ENCODE measurements at regions of chr13 and their contacts with region 1.

Region 1: DNA sequence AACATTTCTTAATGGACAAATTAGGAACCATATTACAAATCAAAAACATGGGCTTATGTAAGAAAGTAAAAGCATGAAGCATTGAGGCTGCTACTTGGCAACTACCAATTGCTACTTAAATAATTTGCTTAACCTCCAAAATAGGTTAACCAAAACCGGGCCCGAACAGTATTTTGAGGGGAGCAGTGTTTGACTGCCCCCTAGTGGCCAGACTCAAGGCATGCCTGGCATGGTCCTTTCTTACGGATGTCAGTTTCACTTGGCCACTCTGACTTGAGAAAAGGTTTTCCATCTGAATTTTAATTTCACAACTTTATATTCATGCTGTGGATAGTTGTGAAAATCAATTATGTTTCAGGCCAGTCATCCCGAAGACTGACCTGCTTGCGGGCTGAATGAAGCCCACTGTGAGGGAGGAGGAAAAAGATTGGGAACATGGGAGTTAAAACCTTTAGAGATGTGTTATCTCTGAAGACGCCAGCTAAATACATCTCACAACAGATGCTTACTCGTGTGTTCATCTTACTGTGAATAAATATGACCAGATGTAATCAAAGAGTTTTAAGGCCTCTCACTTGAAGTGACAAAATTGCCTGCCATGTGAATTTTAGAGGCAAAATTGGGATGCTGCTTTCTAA is 2.9 kb downstream of the RXFP2 start:
- DNase-seq: peak; percentile 85
- H3K4me3 ChIP-seq: peak overlapping the region; percentile 40
- H3K27ac ChIP-seq: no peak overlapping the region
- H3K4me1 ChIP-seq: peaks cover 9% of the 10 kb centered on the region
- H3K27me3 ChIP-seq: no peaks in the 10 kb centered on the region

Region 2: GRCh38 chr13:31437975-31438374 is 304.2 kb before region 1 on chr13:
- in situ Hi-C with region 1: loop called (anchors 5 kb)
- DNase-seq: peak; percentile 51
- H3K4me3 ChIP-seq: no peak overlapping the region
- H3K27ac ChIP-seq: no peak overlapping the region
- H3K4me1 ChIP-seq: peaks cover 12% of the 10 kb centered on the region
- H3K27me3 ChIP-seq: no peaks in the 10 kb centered on the region

Region 3: GRCh38 chr13:32178763-32179342 is 436.6 kb after region 1 on chr13:
- in situ Hi-C with region 1: no loop called
- DNase-seq: no peak
- H3K4me3 ChIP-seq: no peak overlapping the region
- H3K27ac ChIP-seq: no peak overlapping the region
- H3K4me1 ChIP-seq: no peaks in the 10 kb centered on the region
- H3K27me3 ChIP-seq: no peaks in the 10 kb centered on the region

Region 4: DNA sequence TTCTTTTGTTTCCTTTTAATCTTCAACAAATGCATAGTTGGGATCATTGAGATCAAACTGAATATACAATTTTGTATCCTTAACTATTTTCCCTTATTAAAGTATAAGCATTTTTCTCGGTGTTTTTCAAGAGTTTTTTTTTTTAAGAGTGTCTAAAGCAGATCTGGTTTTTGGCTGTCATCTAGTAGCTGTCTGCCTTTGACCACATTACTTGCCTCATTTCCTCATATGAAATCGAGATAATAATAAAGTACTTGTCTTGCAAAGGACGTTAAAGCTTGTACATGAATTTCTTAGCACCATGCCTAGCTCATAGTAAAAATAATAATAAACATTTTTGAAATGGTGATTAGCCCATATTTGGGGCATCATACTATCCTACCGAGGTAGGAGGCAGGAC is 965.3 kb after region 1 on chr13:
- in situ Hi-C with region 1: no loop called
- DNase-seq: no peak
- H3K4me3 ChIP-seq: no peak overlapping the region
- H3K27ac ChIP-seq: no peak overlapping the region
- H3K4me1 ChIP-seq: no peaks in the 10 kb centered on the region
- H3K27me3 ChIP-seq: no peaks in the 10 kb centered on the region

Region 5: DNA sequence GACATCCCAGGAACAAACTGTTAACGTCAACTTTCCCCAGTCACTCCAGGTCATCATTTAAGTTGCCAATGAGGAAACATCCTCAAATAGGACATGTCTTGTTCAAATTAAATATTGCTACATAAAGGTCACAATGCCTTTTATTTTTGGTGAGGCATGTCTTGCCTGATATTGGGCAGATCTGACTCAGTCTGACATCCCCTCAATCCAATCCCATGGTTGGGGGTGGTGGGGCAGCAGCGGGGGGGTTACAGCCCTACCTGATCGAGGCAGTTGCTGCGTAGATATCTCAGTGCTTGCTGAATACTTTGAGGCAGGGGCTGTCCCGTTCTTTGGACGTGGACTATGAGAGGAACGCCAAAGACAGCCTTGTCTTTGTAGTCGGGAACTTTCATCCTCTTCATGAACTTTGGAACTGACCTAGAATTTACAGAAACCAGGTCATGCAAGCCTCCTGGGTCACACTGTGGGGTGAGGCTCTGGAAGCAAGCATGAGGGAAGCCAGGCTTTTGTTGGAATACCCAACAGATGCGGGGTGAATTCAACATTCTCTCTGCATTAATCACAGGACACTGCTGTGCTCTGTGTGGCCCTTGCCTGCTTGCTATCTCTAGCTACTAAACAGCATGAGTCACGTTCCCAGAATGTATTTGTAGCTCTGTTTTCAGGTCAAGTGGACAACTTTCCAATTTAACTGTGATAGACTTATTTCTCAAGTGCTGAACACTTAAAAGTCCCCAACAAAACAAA is 1383.8 kb after region 1 on chr13:
- in situ Hi-C with region 1: no loop called
- DNase-seq: peak; percentile 96
- H3K4me3 ChIP-seq: peak overlapping the region; percentile 24
- H3K27ac ChIP-seq: peak overlapping the region; percentile 79
- H3K4me1 ChIP-seq: peaks cover 38% of the 10 kb centered on the region
- H3K27me3 ChIP-seq: no peaks in the 10 kb centered on the region

Measured in GM23248 (cell line).